ENCODE measurements at regions of chr9 and their contacts with region 1.

Region 1: DNA sequence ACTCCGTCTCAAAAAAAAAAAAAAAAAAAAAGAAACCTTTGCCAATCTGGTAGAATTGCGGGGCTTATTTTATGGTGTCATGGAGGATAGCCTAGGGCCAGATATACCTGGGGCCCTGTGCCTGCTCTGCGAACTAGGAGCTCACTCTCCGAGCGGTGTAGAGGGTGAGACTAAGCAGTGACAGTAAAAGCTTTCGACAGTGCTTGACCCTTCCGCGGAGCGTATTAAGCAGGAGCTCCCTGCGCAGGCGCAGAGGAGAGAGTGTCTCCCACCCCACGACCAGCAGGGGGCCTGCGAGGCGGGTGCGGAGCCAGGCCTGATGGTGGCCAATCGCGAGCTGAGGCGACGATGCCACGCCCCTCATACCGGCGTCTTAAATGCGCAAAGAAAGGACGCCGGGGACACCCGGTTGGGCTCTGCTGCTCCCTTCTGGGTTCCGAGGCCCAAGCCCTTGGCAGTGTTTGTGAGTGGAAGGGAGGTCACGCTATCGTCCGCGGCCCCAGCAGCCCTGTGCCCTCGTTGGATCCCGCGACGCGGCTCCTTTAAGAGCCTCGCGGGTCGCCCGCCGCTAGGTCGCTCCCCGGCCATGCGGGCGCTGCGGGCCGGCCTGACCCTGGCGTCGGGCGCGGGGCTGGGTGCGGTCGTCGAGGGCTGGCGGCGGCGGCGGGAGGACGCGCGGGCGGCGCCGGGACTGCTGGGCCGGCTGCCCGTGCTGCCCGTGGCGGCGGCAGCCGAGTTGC is at the start of gene ENDOG:
- DNase-seq: peak; percentile 88
- H3K4me3 ChIP-seq: peak within 1 kb of the TSS; percentile 80
- H3K27ac ChIP-seq: peak within 1 kb of the TSS; percentile 21
- H3K27me3 ChIP-seq: no peaks in the 10 kb centered on the region
- CTCF ChIP-seq: peak; percentile 98
- polyA plus RNA-seq, gene ENDOG: 6.3 and 7.8 TPM in 2 replicates

Region 2: DNA sequence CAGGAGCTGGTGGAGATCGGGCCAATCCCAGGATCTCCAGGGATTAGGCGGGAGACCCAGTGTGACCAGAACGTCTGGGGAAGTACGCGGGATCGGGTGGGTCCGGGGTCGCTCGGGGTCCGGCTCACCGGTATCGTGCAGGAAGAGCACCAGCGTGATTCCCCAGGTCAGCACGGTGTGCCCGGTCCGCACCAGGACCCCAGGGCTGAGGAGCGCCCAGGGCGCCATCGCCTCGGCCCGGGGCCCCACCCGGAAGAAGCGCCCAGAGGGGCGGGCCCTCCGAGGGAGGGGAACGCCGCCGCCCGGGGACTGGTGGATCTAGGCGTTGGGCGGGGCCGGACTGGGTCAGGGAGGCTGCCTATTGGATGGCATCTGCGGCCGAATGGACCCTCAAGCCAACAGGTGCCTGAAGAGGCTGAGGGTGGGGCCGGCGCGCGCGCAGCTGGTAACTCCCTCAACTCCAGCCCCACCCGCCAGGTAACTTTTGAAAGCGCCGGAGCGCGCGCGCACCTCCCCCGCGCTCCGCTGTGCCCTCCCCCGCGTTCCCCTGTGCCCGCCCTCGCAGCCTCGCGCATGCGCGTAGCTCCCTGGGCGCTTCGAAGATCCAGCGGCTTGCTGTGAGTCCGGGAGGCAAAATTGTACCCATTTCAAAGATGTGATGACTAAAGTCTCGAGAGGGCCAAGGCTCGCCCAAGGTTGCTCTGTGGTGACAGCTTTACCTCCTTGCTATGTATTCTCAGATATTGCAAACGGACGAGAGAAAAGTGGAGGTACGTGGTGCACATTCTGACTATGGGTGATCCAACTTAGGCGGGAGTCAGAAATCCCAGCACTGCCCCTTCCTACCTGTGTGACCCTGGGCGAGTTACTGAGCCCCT is 94.2 kb before region 1 on chr9 and contains the start of gene ZDHHC12:
- CTCF ChIA-PET with region 1: interaction called, 12 read pairs
- POLR2A ChIA-PET with region 1: interaction called, 7 read pairs
- DNase-seq: peak; percentile 81
- H3K4me3 ChIP-seq: peak within 1 kb of the TSS; percentile 78
- H3K27ac ChIP-seq: no peak within 1 kb of the TSS
- H3K27me3 ChIP-seq: no peaks in the 10 kb centered on the region
- CTCF ChIP-seq: no peak
- polyA plus RNA-seq, gene ZDHHC12: 23.2 and 33.7 TPM in 2 replicates

Region 3: GRCh38 chr9:128771745-128772519 is 46.3 kb before region 1 on chr9 and contains the start of gene ZER1:
- CTCF ChIA-PET with region 1: interaction called, 10 read pairs
- POLR2A ChIA-PET with region 1: no interaction called
- DNase-seq: peak; percentile 55
- H3K4me3 ChIP-seq: peak within 1 kb of the TSS; percentile 99
- H3K27ac ChIP-seq: peak within 1 kb of the TSS; percentile 89
- H3K27me3 ChIP-seq: no peaks in the 10 kb centered on the region
- CTCF ChIP-seq: no peak
- polyA plus RNA-seq, gene ZER1: 28.0 and 38.4 TPM in 2 replicates

Region 4: DNA sequence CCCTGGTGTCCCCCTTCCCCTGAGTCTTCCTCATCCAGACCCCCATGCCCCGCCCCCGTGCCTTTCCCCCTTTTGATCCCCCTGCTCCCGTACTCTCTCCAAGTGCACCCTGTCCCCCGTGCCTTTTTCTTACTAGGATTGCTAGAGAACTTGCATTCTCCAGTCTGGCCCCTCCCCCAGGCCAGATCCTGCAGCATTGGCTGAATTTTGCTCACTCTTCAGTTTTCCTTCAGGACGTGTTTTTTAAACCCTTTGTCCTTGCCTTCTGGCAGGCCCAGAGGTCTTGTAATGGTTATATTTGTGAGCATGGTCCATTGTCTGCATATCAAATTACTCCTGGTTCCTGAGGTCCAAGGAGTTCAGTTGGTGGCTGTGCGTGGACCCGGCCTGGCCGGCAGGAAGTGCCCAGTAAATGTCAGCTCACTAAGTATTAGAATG is 30.6 kb before region 1 on chr9:
- CTCF ChIA-PET with region 1: interaction called, 17 read pairs
- POLR2A ChIA-PET with region 1: no interaction called
- DNase-seq: no peak
- H3K4me3 ChIP-seq: peak overlapping the region; percentile 94
- H3K27ac ChIP-seq: no peak overlapping the region
- H3K27me3 ChIP-seq: no peaks in the 10 kb centered on the region
- CTCF ChIP-seq: no peak

Region 5: DNA sequence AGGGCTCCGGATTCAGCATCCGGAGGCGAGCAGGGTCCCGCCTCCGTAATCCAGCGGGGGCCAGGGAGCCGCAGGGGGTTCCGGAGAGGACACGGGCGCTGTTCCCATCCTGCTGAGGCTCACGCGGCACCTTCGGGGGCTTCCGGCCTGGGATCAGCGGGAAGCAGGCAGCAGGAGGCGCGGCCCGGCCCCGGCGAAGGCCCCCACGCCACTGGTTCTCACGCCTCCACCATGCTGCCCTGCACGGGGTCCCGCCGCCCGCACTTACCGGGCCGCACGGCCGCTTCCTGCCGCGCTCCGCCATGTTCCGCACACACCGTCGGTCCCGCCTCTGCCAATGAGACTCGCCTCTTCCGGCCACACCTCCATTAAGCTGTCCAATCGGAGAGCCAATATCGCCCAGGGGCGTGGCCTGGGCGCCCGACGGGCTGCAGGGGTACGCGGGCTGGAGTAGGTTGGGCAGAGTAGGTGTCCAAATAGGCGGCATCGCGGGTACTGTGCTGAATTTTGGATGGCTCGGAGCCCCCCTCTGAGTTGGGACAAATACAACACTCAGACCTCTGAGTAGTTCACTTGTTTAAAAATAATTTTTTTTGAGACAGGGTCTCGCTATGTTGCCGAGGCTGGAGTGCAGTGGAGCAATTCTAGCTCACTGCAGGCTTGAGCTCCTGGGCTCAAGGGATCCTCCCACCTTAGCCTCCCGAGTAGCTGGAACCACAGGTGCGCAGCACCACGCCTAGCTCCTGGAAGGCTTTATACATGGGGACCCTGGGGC is 11.4 kb after region 1 on chr9 and contains the start of gene SPOUT1:
- CTCF ChIA-PET with region 1: interaction called, 39 read pairs
- POLR2A ChIA-PET with region 1: interaction called, 17 read pairs
- DNase-seq: peak; percentile 59
- H3K4me3 ChIP-seq: peak within 1 kb of the TSS; percentile 87
- H3K27ac ChIP-seq: peak within 1 kb of the TSS; percentile 70
- H3K27me3 ChIP-seq: no peaks in the 10 kb centered on the region
- CTCF ChIP-seq: no peak
- polyA plus RNA-seq, gene SPOUT1: 19.1 and 24.7 TPM in 2 replicates

Region 6: GRCh38 chr9:128927731-128928411 is 109.6 kb after region 1 on chr9:
- CTCF ChIA-PET with region 1: interaction called, 19 read pairs
- POLR2A ChIA-PET with region 1: no interaction called
- DNase-seq: no peak
- H3K4me3 ChIP-seq: no peak overlapping the region
- H3K27ac ChIP-seq: peak overlapping the region; percentile 31
- H3K27me3 ChIP-seq: no peaks in the 10 kb centered on the region
- CTCF ChIP-seq: peak; percentile 89